Activated T-helper 2 cell treated with anti-CD3 and anti-CD28 coated beads, Interferon-gamma antibody, Interleukin-2, Interleukin-4, amounts not matched to agents 10 μg/mL and 5 μg/mL and 100 μg/mL, durations not matched to agents 14 hours and 24 hours and 36 hours (primary cell): ENCODE measurements at regions of chr21 and their contacts with region 1.

Region 1: GRCh38 chr21:32770871-32771523 is 558 bp downstream of the PAXBP1 start:
- DNase-seq: no peak
- H3K4me3 Mint-ChIP-seq: peak overlapping the region; percentile 99
- H3K27ac Mint-ChIP-seq: peak overlapping the region; percentile 91
- H3K4me1 Mint-ChIP-seq: peaks cover 49% of the 10 kb centered on the region
- H3K27me3 Mint-ChIP-seq: no peaks in the 10 kb centered on the region

Region 2: GRCh38 chr21:32412162-32413014 is 358.6 kb before region 1 on chr21 and contains the start of gene EVA1C:
- intact Hi-C with region 1: loop called (anchors 5 kb)
- DNase-seq: peak; percentile 34
- H3K4me3 Mint-ChIP-seq: peak within 1 kb of the TSS; percentile 93
- H3K27ac Mint-ChIP-seq: peak within 1 kb of the TSS; percentile 91
- H3K4me1 Mint-ChIP-seq: peaks cover 17% of the 10 kb centered on the region
- H3K27me3 Mint-ChIP-seq: no peaks in the 10 kb centered on the region
- total RNA-seq, gene EVA1C: 8.1 and 8.4 TPM in 2 replicates

Region 3: GRCh38 chr21:32612075-32612998 is 158.7 kb before region 1 on chr21 and contains the start of gene CFAP298:
- intact Hi-C with region 1: loop called (anchors 2 kb)
- DNase-seq: peak; percentile 86
- H3K4me3 Mint-ChIP-seq: peak within 1 kb of the TSS; percentile 99
- H3K27ac Mint-ChIP-seq: peak within 1 kb of the TSS; percentile 89
- H3K4me1 Mint-ChIP-seq: peaks cover 4% of the 10 kb centered on the region
- H3K27me3 Mint-ChIP-seq: peaks cover 2% of the 10 kb centered on the region
- total RNA-seq, gene CFAP298: 44.5 and 48.6 TPM in 2 replicates

Region 4: DNA sequence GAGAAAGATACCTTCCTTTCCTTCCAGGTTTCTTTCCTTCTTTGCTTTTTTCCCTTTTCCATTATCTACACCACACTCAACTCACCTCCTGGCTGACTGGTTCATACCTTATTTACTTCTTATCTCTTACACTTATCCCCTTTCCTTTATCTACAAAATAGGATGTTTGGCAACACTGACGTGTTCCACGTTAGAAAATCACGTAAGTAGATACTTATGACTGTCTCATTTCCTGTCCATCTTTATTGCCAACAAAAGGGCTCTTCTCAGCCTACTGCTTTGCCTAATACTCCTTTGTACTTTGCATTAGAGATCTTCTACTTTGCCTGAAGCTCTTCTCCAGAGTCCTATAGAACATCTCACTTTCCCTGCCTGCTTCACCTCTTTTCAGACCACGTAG is 68.3 kb before region 1 on chr21:
- intact Hi-C with region 1: no loop called
- DNase-seq: no peak
- H3K4me3 Mint-ChIP-seq: no peak overlapping the region
- H3K27ac Mint-ChIP-seq: no peak overlapping the region
- H3K4me1 Mint-ChIP-seq: peaks cover 29% of the 10 kb centered on the region
- H3K27me3 Mint-ChIP-seq: no peaks in the 10 kb centered on the region

Region 5: GRCh38 chr21:32727687-32728455 is 43.1 kb before region 1 on chr21 and contains the start of gene SYNJ1:
- intact Hi-C with region 1: loop called (anchors 1 kb)
- DNase-seq: peak; percentile 93
- H3K4me3 Mint-ChIP-seq: peak within 1 kb of the TSS; percentile 98
- H3K27ac Mint-ChIP-seq: peak within 1 kb of the TSS; percentile 95
- H3K4me1 Mint-ChIP-seq: peaks cover 40% of the 10 kb centered on the region
- H3K27me3 Mint-ChIP-seq: no peaks in the 10 kb centered on the region
- total RNA-seq, gene SYNJ1: 11.8 and 16.5 TPM in 2 replicates

Region 6: DNA sequence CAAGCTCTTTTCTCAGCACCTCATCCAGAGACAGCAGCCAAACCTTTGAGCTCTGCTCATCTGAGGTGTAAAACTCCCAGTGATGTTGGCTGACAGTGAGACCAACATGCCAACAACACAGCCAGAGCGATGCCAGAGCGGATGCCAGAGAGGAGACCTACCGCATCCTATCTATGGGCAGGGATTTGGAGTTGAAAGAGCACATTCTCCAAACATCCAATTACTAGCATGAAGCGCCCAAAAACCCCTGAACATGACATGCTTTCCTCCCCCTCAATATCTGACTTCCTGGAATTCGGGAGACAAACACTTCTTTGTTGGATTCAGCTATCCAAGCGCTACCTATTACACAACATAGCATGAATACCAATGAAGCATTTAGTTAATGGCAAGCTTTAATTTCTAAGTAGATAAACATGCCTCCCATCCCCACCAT is 23.7 kb after region 1 on chr21:
- intact Hi-C with region 1: no loop called
- DNase-seq: no peak
- H3K4me3 Mint-ChIP-seq: no peak overlapping the region
- H3K27ac Mint-ChIP-seq: no peak overlapping the region
- H3K4me1 Mint-ChIP-seq: peaks cover 4% of the 10 kb centered on the region
- H3K27me3 Mint-ChIP-seq: no peaks in the 10 kb centered on the region

Region 7: GRCh38 chr21:32813265-32813903 is 42.4 kb after region 1 on chr21:
- intact Hi-C with region 1: no loop called
- DNase-seq: no peak
- H3K4me3 Mint-ChIP-seq: no peak overlapping the region
- H3K27ac Mint-ChIP-seq: no peak overlapping the region
- H3K4me1 Mint-ChIP-seq: peaks cover 2% of the 10 kb centered on the region
- H3K27me3 Mint-ChIP-seq: no peaks in the 10 kb centered on the region

Region 8: GRCh38 chr21:32826329-32827167 is 55.6 kb after region 1 on chr21:
- intact Hi-C with region 1: loop called (anchors 5 kb)
- DNase-seq: peak; percentile 20
- H3K4me3 Mint-ChIP-seq: no peak overlapping the region
- H3K27ac Mint-ChIP-seq: no peak overlapping the region
- H3K4me1 Mint-ChIP-seq: no peaks in the 10 kb centered on the region
- H3K27me3 Mint-ChIP-seq: peaks cover 10% of the 10 kb centered on the region

Region 9: DNA sequence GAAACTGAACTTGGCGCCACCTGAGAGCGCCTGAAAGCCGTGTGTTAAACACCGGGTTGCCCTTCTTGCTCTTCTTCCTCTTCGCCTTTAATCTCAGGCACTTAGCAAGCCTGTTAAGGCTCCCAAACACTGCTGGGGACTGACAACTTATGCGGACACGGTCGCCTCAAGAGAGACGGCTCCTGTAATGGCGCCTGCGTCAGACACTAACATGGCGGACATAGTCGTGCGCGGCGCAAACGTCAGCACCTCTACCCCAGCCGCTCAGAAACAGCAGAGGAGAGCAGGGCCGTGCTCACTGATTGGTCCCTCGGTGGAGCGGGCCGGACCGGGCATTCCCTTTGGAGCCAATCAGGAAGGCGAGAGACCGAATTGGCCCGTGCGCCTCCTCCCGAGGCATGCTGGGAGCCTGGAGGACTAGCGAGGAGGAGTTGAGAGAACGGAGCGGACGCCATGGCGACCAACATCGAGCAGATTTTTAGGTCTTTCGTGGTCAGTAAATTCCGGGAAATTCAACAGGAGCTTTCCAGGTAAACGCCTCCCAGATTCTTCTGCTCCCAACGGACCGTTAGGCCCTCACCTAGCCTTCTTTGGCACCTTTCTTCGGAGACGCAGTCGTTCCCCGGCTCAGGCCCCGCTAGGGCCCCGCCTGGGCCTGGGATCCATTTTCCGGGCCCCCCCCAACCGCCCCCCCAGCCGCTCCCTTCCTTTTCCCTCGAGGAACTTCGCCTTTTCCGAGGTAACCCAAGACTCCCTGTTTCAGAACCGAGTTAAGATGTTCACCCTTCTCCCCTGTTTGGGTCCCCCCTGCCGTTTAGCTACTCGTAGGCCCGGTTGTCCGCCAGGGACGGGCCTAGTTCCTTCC is 771.9 kb after region 1 on chr21 and contains the start of gene SON:
- intact Hi-C with region 1: loop called (anchors 1 kb)
- DNase-seq: peak; percentile 98
- H3K4me3 Mint-ChIP-seq: peak within 1 kb of the TSS; percentile 95
- H3K27ac Mint-ChIP-seq: peak within 1 kb of the TSS; percentile 100
- H3K4me1 Mint-ChIP-seq: peaks cover 31% of the 10 kb centered on the region
- H3K27me3 Mint-ChIP-seq: no peaks in the 10 kb centered on the region
- total RNA-seq, gene SON: 345 and 376 TPM in 2 replicates